MCF 10A (cell line): ENCODE measurements at regions of chr2 and their contacts with region 1.

Region 1: GRCh38 chr2:138676619-138677032 is 103.6 kb downstream of the NXPH2 start:
- DNase-seq: peak; percentile 22
- H3K4me3 Mint-ChIP-seq: no peak overlapping the region
- H3K27ac Mint-ChIP-seq: no peak overlapping the region
- H3K4me1 Mint-ChIP-seq: no peaks in the 10 kb centered on the region
- H3K27me3 Mint-ChIP-seq: no peaks in the 10 kb centered on the region
- CTCF ChIP-seq: no peak

Region 2: GRCh38 chr2:138752197-138752956 is 75.8 kb after region 1 on chr2:
- CTCF ChIA-PET with region 1: no interaction called
- POLR2A ChIA-PET with region 1: no interaction called
- intact Hi-C with region 1: loop called (anchors 2 kb)
- DNase-seq: peak; percentile 60
- H3K4me3 Mint-ChIP-seq: no peak overlapping the region
- H3K27ac Mint-ChIP-seq: peak overlapping the region; percentile 9
- H3K4me1 Mint-ChIP-seq: peaks cover 8% of the 10 kb centered on the region
- H3K27me3 Mint-ChIP-seq: no peaks in the 10 kb centered on the region
- CTCF ChIP-seq: no peak